Activated T-helper 2 cell treated with anti-CD3 and anti-CD28 coated beads, Interferon-gamma antibody, Interleukin-2, Interleukin-4, amounts not matched to agents 10 μg/mL and 5 μg/mL and 100 μg/mL, durations not matched to agents 14 hours and 24 hours and 36 hours (primary cell): ENCODE measurements at regions of chr1 and their contacts with region 1.

Region 1: DNA sequence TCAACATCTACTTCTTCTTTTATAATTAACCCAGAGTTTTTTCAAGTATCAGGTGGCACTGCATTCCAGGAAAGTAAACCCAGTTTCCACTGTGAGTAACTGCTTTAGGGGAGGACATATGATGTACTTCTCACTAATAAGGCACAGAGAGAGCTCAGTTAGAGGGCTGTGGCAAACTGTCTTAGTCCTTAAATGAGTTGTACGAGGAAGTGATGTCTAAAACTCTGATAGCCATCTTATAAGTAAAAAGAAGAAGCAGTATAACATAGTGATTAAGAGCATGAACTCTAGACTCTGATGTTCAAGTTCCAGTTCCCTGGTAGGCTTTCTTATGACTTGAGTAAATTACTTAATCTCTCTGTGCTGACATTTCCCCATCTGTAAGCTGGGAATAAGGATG is 58.7 kb upstream of the PTGS2 start:
- DNase-seq: peak; percentile 24
- H3K4me3 Mint-ChIP-seq: peak overlapping the region; percentile 69
- H3K27ac Mint-ChIP-seq: peak overlapping the region; percentile 86
- H3K4me1 Mint-ChIP-seq: peaks cover 60% of the 10 kb centered on the region
- H3K27me3 Mint-ChIP-seq: no peaks in the 10 kb centered on the region

Region 2: GRCh38 chr1:186286615-186287317 is 452.2 kb before region 1 on chr1:
- intact Hi-C with region 1: loop called (anchors 5 kb)
- DNase-seq: no peak
- H3K4me3 Mint-ChIP-seq: no peak overlapping the region
- H3K27ac Mint-ChIP-seq: no peak overlapping the region
- H3K4me1 Mint-ChIP-seq: peaks cover 49% of the 10 kb centered on the region
- H3K27me3 Mint-ChIP-seq: no peaks in the 10 kb centered on the region

Region 3: GRCh38 chr1:186618401-186619170 is 120.3 kb before region 1 on chr1:
- intact Hi-C with region 1: loop called (anchors 1 kb)
- DNase-seq: peak; percentile 45
- H3K4me3 Mint-ChIP-seq: peak overlapping the region; percentile 66
- H3K27ac Mint-ChIP-seq: peak overlapping the region; percentile 15
- H3K4me1 Mint-ChIP-seq: peaks cover 45% of the 10 kb centered on the region
- H3K27me3 Mint-ChIP-seq: peaks cover 9% of the 10 kb centered on the region

Region 4: GRCh38 chr1:186662740-186663139 is 76.2 kb before region 1 on chr1:
- intact Hi-C with region 1: no loop called
- DNase-seq: no peak
- H3K4me3 Mint-ChIP-seq: no peak overlapping the region
- H3K27ac Mint-ChIP-seq: no peak overlapping the region
- H3K4me1 Mint-ChIP-seq: no peaks in the 10 kb centered on the region
- H3K27me3 Mint-ChIP-seq: peaks cover 1% of the 10 kb centered on the region

Region 5: GRCh38 chr1:186722711-186723309 is 16.1 kb before region 1 on chr1:
- intact Hi-C with region 1: loop called (anchors 2 kb)
- DNase-seq: no peak
- H3K4me3 Mint-ChIP-seq: no peak overlapping the region
- H3K27ac Mint-ChIP-seq: no peak overlapping the region
- H3K4me1 Mint-ChIP-seq: peaks cover 13% of the 10 kb centered on the region
- H3K27me3 Mint-ChIP-seq: peaks cover 10% of the 10 kb centered on the region

Region 6: GRCh38 chr1:186792870-186793581 is 54.1 kb after region 1 on chr1:
- intact Hi-C with region 1: loop called (anchors 1 kb)
- DNase-seq: no peak
- H3K4me3 Mint-ChIP-seq: no peak overlapping the region
- H3K27ac Mint-ChIP-seq: peak overlapping the region; percentile 56
- H3K4me1 Mint-ChIP-seq: peaks cover 20% of the 10 kb centered on the region
- H3K27me3 Mint-ChIP-seq: peaks cover 9% of the 10 kb centered on the region

Region 7: GRCh38 chr1:186887203-186887602 is 148.3 kb after region 1 on chr1:
- intact Hi-C with region 1: loop called (anchors 5 kb)
- DNase-seq: no peak
- H3K4me3 Mint-ChIP-seq: no peak overlapping the region
- H3K27ac Mint-ChIP-seq: peak overlapping the region; percentile 78
- H3K4me1 Mint-ChIP-seq: peaks cover 22% of the 10 kb centered on the region
- H3K27me3 Mint-ChIP-seq: no peaks in the 10 kb centered on the region

Region 8: GRCh38 chr1:187275985-187276575 is 537.2 kb after region 1 on chr1:
- intact Hi-C with region 1: no loop called
- DNase-seq: no peak
- H3K4me3 Mint-ChIP-seq: no peak overlapping the region
- H3K27ac Mint-ChIP-seq: no peak overlapping the region
- H3K4me1 Mint-ChIP-seq: no peaks in the 10 kb centered on the region
- H3K27me3 Mint-ChIP-seq: no peaks in the 10 kb centered on the region